ENCODE measurements at regions of chr9 and their contacts with region 1.

Region 1: DNA sequence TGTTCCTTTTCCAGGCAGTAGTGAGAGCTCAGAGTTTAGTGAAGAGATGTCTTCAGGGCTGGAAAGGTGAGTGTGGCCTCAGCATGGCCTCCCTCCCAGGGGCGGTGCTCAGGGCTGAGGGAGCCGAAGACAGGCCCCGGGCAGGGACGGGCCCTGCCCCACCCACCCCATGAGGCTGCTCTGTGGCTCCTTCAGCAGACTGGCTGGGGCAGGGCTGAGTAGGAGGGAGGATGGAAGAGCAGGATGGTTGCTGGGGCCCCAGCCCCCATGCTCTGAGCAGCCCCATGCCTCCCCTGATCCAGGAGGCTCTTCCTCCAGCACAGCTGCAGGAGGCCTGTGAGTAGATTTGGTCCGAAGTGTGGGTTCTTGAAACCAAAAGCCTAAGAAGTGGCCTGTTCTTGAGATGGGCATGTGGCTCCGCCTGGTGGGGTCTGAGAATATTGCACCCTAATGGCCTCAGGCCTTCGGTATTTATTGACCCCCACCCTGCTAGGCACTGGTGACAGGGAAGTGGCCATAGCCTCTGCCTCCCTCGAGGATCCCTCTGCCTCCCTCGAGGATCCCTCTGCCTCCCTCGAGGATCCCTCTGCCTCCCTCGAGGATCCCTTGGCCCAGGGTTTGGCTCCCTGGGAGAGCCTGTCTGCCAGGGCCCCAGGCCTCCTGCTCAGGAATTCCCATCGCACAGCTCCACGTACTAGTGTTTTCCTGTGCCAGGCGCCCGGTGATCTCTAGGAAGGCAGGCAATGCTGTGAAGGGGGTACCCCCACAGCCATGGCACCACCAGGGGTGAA is 65.4 kb upstream of the GARNL3 start:
- DNase-seq: peak; percentile 71
- H3K4me3 ChIP-seq: no peak overlapping the region
- H3K27ac ChIP-seq: peak overlapping the region in 1 of 2 donors; percentile 22
- H3K4me1 ChIP-seq: no peaks in the 10 kb centered on the region
- H3K27me3 ChIP-seq: no peaks in the 10 kb centered on the region
- CTCF ChIP-seq: peak; percentile 91 to 99 (median 97)
- POLR2A ChIP-seq: no peak

Region 2: GRCh38 chr9:126939821-126940221 is 259.4 kb before region 1 on chr9:
- intact Hi-C with region 1: loop called (anchors 1 kb)
- DNase-seq: no peak
- H3K4me3 ChIP-seq: no peak overlapping the region
- H3K27ac ChIP-seq: no peak overlapping the region
- H3K4me1 ChIP-seq: no peaks in the 10 kb centered on the region
- H3K27me3 ChIP-seq: no peaks in the 10 kb centered on the region
- CTCF ChIP-seq: no peak
- POLR2A ChIP-seq: no peak

Region 3: DNA sequence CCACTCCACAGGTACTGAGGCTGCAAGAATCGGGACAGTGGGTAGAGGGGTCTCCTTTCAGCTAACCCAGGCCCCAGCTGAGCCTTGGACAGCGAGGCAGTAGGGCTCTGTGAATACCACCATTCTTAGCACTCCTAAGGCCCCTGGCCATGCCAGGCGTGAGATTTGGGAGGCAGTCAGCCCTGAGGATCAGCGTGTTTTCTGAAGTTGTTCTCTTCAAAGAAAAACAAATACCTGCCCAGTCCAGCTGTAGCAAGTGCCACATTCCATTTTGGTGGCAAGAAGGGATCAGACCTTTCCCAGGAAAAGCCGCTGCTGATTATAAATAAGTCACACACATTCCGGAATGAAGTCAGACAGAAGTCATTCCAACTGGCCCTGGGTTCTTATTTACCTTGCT is 236.9 kb before region 1 on chr9:
- intact Hi-C with region 1: loop called (anchors 5 kb)
- DNase-seq: no peak
- H3K4me3 ChIP-seq: no peak overlapping the region
- H3K27ac ChIP-seq: no peak overlapping the region
- H3K4me1 ChIP-seq: no peaks in the 10 kb centered on the region
- H3K27me3 ChIP-seq: no peaks in the 10 kb centered on the region
- CTCF ChIP-seq: no peak
- POLR2A ChIP-seq: no peak

Region 4: GRCh38 chr9:127021664-127022363 is 177.4 kb before region 1 on chr9:
- intact Hi-C with region 1: loop called (anchors 5 kb)
- DNase-seq: peak; percentile 36
- H3K4me3 ChIP-seq: no peak overlapping the region
- H3K27ac ChIP-seq: peak overlapping the region; percentile 85 to 90
- H3K4me1 ChIP-seq: peaks cover 13% of the 10 kb centered on the region
- H3K27me3 ChIP-seq: no peaks in the 10 kb centered on the region
- CTCF ChIP-seq: no peak
- POLR2A ChIP-seq: no peak